ENCODE measurements at regions of chr4 and their contacts with region 1.

Region 1: GRCh38 chr4:21790438-21791029 is 158.0 kb downstream of the KCNIP4 start:
- DNase-seq: no peak
- H3K4me3 ChIP-seq: no peak overlapping the region
- H3K27ac ChIP-seq: no peak overlapping the region
- H3K4me1 ChIP-seq: no peaks in the 10 kb centered on the region
- H3K27me3 ChIP-seq: no peaks in the 10 kb centered on the region
- CTCF ChIP-seq: peak in 5 of 11 experiments; percentile 15 to 32 (median 22)
- POLR2A ChIP-seq: no peak

Region 2: DNA sequence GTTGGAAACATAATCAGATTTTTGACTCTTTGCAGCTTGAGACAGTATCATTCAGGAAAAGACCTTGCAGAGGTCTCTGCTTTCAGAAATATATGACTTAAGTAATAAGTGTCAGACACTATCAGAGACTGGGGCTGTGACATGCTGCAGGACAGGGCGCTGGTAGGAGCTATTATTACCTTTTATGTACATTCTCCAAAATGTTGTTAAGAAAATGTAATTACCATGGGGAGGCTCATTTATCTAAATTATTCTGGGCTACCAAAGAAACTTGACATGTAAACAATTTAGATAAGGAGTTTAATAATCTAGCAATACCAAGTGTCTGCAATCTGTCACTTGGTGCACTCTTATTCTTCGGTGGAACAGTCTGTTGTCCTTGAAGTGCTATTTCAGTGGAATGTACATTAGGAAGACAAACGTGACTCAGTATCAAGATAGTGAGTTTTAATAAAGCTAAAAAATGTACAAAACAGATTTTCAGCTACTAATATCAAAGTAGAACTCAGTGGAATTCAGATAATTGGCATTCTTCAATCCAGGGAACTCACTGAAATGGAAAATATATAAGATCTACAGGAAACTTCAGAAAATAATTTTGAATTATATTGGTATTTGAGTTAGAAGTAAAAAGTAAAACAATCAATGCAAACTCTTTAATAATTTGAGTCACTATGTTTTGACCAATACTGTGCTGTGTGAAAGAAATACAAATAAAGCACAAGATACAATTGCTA is 56.5 kb before region 1 on chr4:
- intact Hi-C with region 1: no loop called
- DNase-seq: no peak
- H3K4me3 ChIP-seq: no peak overlapping the region
- H3K27ac ChIP-seq: no peak overlapping the region
- H3K4me1 ChIP-seq: no peaks in the 10 kb centered on the region
- H3K27me3 ChIP-seq: no peaks in the 10 kb centered on the region
- CTCF ChIP-seq: no peak
- POLR2A ChIP-seq: no peak

Region 3: GRCh38 chr4:21952549-21952948 is 162.0 kb after region 1 on chr4:
- intact Hi-C with region 1: no loop called
- DNase-seq: no peak
- H3K4me3 ChIP-seq: no peak overlapping the region
- H3K27ac ChIP-seq: no peak overlapping the region
- H3K4me1 ChIP-seq: peaks cover 0 to 15% (median 3%) of the 10 kb centered on the region in 6 donors
- H3K27me3 ChIP-seq: peaks cover 0 to 29% (median 8%) of the 10 kb centered on the region in 7 donors
- CTCF ChIP-seq: no peak
- POLR2A ChIP-seq: no peak

Region 4: DNA sequence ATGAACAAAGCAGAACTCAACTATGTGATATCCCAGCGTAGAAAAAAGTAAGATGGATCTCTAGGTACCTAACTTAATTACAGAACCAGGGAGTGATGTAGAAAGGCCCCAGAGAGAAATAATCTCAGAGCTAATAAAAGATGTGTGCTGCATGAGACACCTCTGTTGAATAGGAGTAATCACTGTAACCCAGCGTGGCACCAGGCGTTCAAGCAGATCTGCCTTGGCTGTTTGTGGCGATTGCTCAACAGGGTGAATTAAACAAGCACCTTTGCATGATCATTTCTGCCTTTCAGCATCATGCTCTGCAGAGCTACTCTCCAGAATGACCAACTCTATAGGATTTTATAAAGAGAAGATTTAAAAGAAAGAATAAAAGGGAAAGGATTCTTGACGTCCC is 239.8 kb after region 1 on chr4:
- intact Hi-C with region 1: no loop called
- DNase-seq: no peak
- H3K4me3 ChIP-seq: no peak overlapping the region
- H3K27ac ChIP-seq: no peak overlapping the region
- H3K4me1 ChIP-seq: no peaks in the 10 kb centered on the region
- H3K27me3 ChIP-seq: no peaks in the 10 kb centered on the region
- CTCF ChIP-seq: no peak
- POLR2A ChIP-seq: no peak

Region 5: DNA sequence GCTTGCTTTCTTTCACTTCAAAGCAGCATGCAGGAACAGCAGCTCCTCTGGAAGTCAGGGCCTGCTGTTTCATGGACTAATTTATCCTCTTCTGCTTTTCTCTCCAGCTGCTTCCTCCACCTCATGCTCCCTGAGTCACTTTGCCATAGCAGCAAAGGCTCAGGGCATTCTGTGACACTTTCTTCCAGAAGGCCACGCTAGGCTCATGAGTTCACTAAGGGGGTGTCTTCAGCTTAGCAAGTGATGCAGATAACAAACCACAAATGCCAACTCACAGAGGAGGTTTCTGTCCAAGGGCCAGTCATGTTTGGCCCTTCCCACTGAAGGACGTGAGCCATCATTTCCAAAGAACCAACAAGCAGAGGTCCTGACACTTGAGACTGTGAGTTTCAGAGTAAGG is 525.1 kb after region 1 on chr4:
- intact Hi-C with region 1: no loop called
- DNase-seq: no peak
- H3K4me3 ChIP-seq: no peak overlapping the region
- H3K27ac ChIP-seq: no peak overlapping the region
- H3K4me1 ChIP-seq: no peaks in the 10 kb centered on the region
- H3K27me3 ChIP-seq: no peaks in the 10 kb centered on the region
- CTCF ChIP-seq: no peak
- POLR2A ChIP-seq: no peak

Region 6: DNA sequence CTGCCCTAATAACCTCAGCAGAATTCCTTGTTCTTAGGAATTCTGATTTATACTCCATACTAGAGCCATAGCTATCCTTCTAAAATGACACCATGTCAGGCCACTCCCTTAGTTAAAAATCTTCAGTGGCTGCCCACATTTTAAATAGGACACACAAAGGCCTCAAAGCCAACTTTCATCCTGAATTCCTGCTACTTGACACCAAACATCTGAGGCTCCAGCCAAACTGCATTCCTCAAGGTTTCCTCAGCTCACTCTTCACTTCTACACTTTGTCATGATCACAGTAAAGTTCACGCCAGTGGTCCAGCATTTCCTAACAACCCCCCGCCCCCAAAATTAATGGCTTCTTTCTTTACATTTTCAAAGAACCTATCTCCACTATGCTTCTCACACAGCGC is 601.0 kb after region 1 on chr4:
- intact Hi-C with region 1: loop called (anchors 2 kb)
- DNase-seq: no peak
- H3K4me3 ChIP-seq: no peak overlapping the region
- H3K27ac ChIP-seq: no peak overlapping the region
- H3K4me1 ChIP-seq: no peaks in the 10 kb centered on the region
- H3K27me3 ChIP-seq: no peaks in the 10 kb centered on the region
- CTCF ChIP-seq: no peak
- POLR2A ChIP-seq: no peak